Endothelial cell of umbilical vein (primary cell): ENCODE measurements at regions of chr22 and their contacts with region 1.

Region 1: GRCh38 chr22:45775569-45776312 is 104.1 kb downstream of the ATXN10 start:
- DNase-seq: no peak
- H3K4me3 ChIP-seq: no peak overlapping the region
- H3K27ac ChIP-seq: no peak overlapping the region
- H3K4me1 ChIP-seq: peaks cover 7% of the 10 kb centered on the region
- H3K27me3 ChIP-seq: no peaks in the 10 kb centered on the region
- CTCF ChIP-seq: no peak
- POLR2A ChIP-seq: no peak

Region 2: DNA sequence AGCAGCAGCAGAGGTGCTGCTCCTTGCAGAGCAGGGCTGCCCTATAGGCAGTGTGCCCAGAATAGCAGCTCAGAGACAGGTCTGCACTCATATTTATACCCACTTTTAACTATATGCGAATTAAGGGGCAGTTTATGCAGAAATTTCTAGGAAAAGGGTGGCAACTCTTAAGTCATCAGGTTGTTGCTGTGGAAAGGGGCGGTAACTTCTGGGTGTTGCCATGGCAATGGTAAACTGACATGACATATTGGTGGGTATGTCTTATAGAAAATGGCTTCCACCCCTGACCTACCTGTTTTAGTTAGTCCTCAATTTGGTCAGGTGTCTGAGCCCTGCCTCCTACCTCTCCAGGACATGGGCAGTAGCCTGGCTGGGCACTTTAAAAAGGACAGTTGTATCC is 18.2 kb after region 1 on chr22:
- CTCF ChIA-PET with region 1: interaction called, 10 read pairs
- POLR2A ChIA-PET with region 1: no interaction called
- dilution Hi-C with region 1: no loop called
- intact Hi-C with region 1: no loop called
- DNase-seq: no peak
- H3K4me3 ChIP-seq: no peak overlapping the region
- H3K27ac ChIP-seq: no peak overlapping the region
- H3K4me1 ChIP-seq: no peaks in the 10 kb centered on the region
- H3K27me3 ChIP-seq: no peaks in the 10 kb centered on the region
- CTCF ChIP-seq: no peak
- POLR2A ChIP-seq: no peak